Thyroid gland (tissue), 4 donors: ENCODE measurements at regions of chr2 and their contacts with region 1.

Region 1: GRCh38 chr2:98608116-98608999 is at the starts of genes COA5 and UNC50:
- DNase-seq: peak; percentile 87
- H3K4me3 ChIP-seq: peak within 1 kb of the TSS; percentile 65 to 78 (median 77)
- H3K27ac ChIP-seq: peak within 1 kb of the TSS; percentile 86 to 96 (median 91)
- H3K4me1 ChIP-seq: peaks cover 31 to 36% of the 10 kb centered on the region in 2 donors
- H3K27me3 ChIP-seq: no peaks in the 10 kb centered on the region
- CTCF ChIP-seq: peak in 2 of 6 experiments; percentile 8 to 15
- POLR2A ChIP-seq: peak in 1 of 2 donors; percentile 86
- total RNA-seq, gene COA5: 51.5 to 68.3 (median 55.1) TPM
- total RNA-seq, gene UNC50: 75.3 to 86.1 (median 81.9) TPM

Region 2: GRCh38 chr2:98444436-98445176 is 163.8 kb before region 1 on chr2 and contains the start of gene INPP4A:
- intact Hi-C with region 1: loop called (anchors 10 kb)
- DNase-seq: peak; percentile 76 to 84
- H3K4me3 ChIP-seq: peak within 1 kb of the TSS; percentile 16 to 68 (median 57)
- H3K27ac ChIP-seq: peak within 1 kb of the TSS; percentile 2 to 75 (median 51)
- H3K4me1 ChIP-seq: peaks cover 16 to 19% of the 10 kb centered on the region in 2 donors
- H3K27me3 ChIP-seq: no peaks in the 10 kb centered on the region
- CTCF ChIP-seq: peak in 3 of 6 experiments; percentile 22 to 43 (median 38)
- POLR2A ChIP-seq: peak in 1 of 2 donors; percentile 80
- total RNA-seq, gene INPP4A: 18.9 to 24.9 (median 23.8) TPM

Region 3: DNA sequence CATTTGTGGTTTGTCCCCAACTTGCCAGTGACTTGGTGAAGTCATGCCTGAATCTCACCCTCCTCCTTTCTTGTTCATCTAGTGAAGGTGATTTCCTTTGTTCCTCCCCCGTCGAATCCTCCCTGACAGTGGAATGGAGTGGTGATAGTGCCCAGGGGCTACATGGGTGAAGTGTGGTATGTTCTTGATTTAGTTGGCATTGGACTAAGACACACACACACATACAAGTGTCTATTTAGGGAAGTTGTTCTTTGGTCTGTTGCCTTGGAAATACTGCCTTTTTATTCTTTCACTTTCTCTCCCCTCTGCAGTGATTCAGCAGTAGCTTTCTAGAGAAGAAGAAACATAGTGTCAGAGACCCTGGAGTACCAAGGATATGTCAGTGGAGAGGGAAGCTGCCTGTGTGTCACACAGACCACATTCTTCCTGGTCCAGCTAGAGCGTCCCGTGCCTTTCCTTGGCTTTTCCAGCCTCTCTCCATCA is 152.8 kb before region 1 on chr2:
- intact Hi-C with region 1: no loop called
- DNase-seq: no peak
- H3K4me3 ChIP-seq: no peak overlapping the region
- H3K27ac ChIP-seq: no peak overlapping the region
- H3K4me1 ChIP-seq: peaks cover 11 to 39% of the 10 kb centered on the region in 2 donors
- H3K27me3 ChIP-seq: no peaks in the 10 kb centered on the region
- CTCF ChIP-seq: no peak
- POLR2A ChIP-seq: no peak